ENCODE measurements at regions of chr17 and their contacts with region 1.

Region 1: DNA sequence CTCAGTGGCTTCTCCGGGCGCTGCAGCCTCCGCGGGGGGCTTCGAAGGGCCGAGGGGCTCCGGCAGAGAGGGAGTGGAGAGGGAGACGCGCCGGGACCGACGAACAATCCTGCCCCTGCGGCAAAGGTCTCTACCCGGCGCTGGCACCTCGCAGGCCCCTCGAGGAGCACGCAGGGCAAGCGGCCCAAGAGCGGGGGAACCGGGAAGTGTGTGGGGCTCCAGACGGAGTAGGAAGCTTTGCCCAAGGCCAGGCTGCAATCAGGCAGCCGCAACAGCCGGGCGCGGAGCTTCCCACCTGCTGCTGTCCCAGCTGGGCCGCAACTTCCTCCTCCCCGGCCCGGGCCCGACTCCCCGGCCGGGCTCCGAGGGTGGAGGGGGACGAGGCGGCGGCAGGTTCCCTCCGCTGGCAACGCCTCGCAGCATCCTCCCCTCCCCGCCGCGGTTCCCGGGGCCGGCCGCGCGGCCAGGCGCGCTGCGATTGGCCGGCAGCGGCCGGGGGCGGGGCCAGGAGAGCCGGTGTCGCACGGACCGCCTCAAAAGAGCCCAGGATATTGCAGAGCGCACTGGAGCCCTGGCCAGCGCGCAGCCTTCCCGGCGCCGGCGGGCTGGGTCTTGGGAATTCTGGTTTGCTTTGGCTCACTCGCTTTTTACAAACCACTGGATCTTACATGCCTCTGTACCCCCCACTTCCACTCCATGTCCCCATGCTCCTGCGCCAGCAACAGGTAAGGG is at the start of gene KCNJ2:
- DNase-seq: peak; percentile 90 to 95
- ATAC-seq: peak; percentile 88 to 95 (median 90)
- H3K4me3 ChIP-seq: peak within 1 kb of the TSS; percentile 83
- H3K27ac ChIP-seq: peak within 1 kb of the TSS; percentile 98
- H3K4me1 ChIP-seq: peaks cover 29% of the 10 kb centered on the region
- H3K27me3 ChIP-seq: no peaks in the 10 kb centered on the region
- CTCF ChIP-seq: no peak
- total RNA-seq, gene KCNJ2: 7.9 to 17.7 (median 9.9) TPM

Region 2: DNA sequence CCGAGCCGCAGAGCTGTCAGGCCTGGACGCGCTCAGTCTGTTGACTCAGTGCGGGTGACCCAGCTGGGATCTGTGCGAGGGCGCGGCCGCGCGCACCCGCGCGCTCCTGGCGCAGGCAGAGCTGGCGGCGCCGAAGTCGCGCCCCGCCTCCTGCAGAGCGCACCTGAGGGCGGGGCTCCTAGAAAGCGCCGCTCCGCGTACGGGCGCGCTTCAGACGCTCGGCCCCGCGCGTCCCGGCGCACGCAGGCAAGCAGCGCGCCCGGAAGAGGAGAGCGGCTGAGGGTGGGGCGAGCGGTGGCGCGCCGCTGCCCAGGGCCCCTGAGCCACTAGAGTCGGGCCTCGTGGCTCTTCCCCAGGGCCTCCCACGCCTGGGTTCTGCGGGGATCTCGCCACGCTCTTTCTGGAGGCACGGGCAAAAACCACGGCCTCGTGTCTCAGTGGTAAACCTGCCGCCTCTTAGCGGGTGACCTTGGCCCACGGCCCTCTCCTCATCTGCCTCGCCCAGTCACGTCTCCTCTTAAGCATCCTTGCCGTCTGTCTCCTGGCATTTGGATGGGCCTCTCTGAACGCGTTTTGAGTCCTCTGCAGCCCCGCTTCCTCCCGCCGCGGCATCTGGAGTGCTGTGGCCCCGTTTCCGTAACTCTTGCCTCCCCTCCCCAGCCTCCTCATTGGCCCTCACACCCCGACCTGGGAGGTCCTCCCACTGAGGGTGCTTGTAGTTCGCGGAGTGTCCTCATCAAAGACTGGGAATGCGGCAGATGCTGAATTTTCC is 841.9 kb before region 1 on chr17 and contains the start of gene ABCA5:
- intact Hi-C with region 1: loop called in 1 of 2 experiments (anchors 10 kb)
- DNase-seq: peak; percentile 89 to 93
- ATAC-seq: peak; percentile 92 to 98 (median 96)
- H3K4me3 ChIP-seq: peak within 1 kb of the TSS; percentile 90
- H3K27ac ChIP-seq: peak within 1 kb of the TSS; percentile 97
- H3K4me1 ChIP-seq: peaks cover 27% of the 10 kb centered on the region
- H3K27me3 ChIP-seq: no peaks in the 10 kb centered on the region
- CTCF ChIP-seq: no peak
- total RNA-seq, gene ABCA5: 54.9 to 81.5 (median 75.0) TPM

Region 3: GRCh38 chr17:69733171-69734012 is 435.8 kb before region 1 on chr17:
- intact Hi-C with region 1: loop called in 1 of 2 experiments (anchors 5 kb)
- DNase-seq: peak; percentile 48 to 83
- ATAC-seq: peak; percentile 99 to 100 (median 100)
- H3K4me3 ChIP-seq: no peak overlapping the region
- H3K27ac ChIP-seq: peak overlapping the region; percentile 73
- H3K4me1 ChIP-seq: peaks cover 39% of the 10 kb centered on the region
- H3K27me3 ChIP-seq: no peaks in the 10 kb centered on the region
- CTCF ChIP-seq: no peak

Region 4: DNA sequence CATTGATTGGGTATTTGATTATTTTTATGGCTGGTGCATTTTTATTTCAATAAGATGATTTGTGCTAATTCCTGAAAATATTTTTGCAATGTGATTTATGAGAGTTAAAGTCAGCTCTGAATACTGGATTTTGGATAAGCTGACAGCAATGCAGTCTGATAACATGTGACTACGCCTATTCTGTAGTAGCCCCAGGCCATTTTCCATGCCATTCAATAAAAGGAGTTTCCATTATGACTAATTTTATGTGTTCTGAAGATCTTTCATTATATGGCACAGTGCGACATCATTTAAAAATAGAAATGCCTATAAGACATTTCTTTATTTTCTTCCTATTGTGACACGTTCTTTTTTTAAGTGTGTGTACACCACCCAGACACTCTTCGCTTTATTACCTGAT is 46.5 kb after region 1 on chr17:
- intact Hi-C with region 1: no loop called
- DNase-seq: no peak
- ATAC-seq: no peak
- H3K4me3 ChIP-seq: no peak overlapping the region
- H3K27ac ChIP-seq: no peak overlapping the region
- H3K4me1 ChIP-seq: no peaks in the 10 kb centered on the region
- H3K27me3 ChIP-seq: no peaks in the 10 kb centered on the region
- CTCF ChIP-seq: no peak

Region 5: DNA sequence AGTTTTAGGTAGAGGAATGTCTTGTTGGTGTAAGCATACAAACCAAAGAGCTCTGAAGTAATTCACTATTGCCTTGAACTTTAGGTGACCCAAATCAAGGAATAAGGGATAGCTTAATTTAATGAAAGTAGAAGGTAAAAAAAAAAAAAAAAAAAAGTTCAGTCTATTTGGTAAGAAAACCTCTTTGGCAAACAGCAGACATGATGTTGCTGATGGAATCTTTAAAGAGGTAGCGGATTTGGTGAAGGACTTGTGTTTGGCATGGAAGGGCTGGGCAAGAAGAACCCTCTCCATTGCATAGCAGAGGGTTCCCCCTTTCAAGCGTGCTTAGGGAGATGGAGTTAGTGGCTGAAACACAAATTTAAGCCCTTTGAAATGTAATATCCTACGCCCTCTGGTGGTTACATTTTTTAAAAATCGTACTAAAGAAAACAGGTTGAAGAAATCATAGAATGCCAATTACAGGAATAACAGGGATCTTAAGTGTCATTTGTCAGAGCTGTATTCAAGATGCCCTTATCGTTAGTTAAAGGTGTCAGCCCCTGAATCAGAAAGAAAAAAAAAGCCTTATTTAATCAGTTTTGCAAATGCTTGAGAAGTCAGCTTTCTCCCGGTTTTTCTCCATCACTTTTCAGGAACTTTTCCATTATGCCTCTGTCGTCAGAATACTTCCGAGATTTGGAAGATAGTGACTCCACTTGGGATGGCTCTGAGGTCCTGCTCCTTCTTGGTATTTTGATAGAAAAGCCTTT is 383.3 kb after region 1 on chr17:
- intact Hi-C with region 1: loop called (anchors 5 to 10 kb)
- DNase-seq: no peak
- ATAC-seq: peak in 3 of 4 donors; percentile 47 to 75 (median 55)
- H3K4me3 ChIP-seq: no peak overlapping the region
- H3K27ac ChIP-seq: no peak overlapping the region
- H3K4me1 ChIP-seq: no peaks in the 10 kb centered on the region
- H3K27me3 ChIP-seq: no peaks in the 10 kb centered on the region
- CTCF ChIP-seq: peak; percentile 63